ENCODE measurements at regions of chr20 and their contacts with region 1.

Region 1: GRCh38 chr20:64119681-64120341 is 12.4 kb upstream of the NPBWR2 start:
- DNase-seq: peak in 1 of 2 experiments; percentile 49
- H3K4me3 ChIP-seq: no peak overlapping the region
- H3K27ac ChIP-seq: no peak overlapping the region
- H3K4me1 ChIP-seq: no peaks in the 10 kb centered on the region; a peak in 2 of 7 replicates
- H3K27me3 ChIP-seq: no peaks in the 10 kb centered on the region; a peak in 2 of 7 replicates
- CTCF ChIP-seq: no peak
- EP300 ChIP-seq: no peak
- POLR2A ChIP-seq: no peak
- RAD21 ChIP-seq: no peak

Region 2: DNA sequence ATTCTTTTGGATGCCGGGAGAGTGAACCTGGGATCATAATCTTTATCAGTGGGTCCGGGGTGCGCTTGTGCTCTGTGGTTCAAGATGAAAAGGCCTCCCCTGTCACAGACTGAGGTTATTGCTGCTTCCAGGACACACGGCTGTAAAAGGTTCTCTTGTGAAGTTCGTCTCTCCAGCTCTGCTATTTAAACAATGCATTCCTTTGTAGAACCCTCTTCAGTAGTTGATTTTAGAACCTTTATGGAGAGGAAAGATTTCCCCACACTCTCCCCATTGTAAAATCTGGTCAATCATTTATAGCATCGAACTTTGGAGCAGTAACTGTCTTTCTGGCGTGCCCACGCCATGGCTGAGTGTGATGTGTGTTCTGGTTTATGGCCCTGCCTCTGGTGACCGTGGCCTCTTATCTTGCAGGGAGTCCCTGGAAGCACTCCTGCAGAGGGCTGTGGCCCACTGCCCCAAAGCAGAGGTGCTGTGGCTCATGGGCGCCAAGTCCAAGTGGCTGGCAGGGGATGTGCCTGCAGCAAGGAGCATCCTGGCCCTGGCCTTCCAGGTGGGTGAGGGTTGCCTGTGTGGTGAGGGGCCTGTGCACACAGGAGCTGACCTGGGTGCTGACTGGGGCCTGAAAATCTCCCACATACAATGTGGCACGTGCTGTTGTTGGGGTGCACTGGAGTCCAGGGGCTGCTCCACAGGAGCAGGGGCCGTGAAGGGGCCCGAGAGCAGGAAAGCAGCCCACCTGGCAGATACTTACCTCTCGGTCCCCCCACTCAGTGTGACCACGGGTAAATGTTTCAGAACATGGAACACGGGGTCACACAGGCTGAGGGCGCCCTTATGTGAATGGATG is 95.4 kb before region 1 on chr20:
- CTCF ChIA-PET with region 1: interaction called, 17 read pairs
- POLR2A ChIA-PET with region 1: no interaction called
- DNase-seq: no peak
- H3K4me3 ChIP-seq: no peak overlapping the region
- H3K27ac ChIP-seq: no peak overlapping the region
- H3K4me1 ChIP-seq: no peaks in the 10 kb centered on the region
- H3K27me3 ChIP-seq: no peaks in the 10 kb centered on the region
- CTCF ChIP-seq: no peak
- EP300 ChIP-seq: no peak
- POLR2A ChIP-seq: no peak
- RAD21 ChIP-seq: no peak

Region 3: DNA sequence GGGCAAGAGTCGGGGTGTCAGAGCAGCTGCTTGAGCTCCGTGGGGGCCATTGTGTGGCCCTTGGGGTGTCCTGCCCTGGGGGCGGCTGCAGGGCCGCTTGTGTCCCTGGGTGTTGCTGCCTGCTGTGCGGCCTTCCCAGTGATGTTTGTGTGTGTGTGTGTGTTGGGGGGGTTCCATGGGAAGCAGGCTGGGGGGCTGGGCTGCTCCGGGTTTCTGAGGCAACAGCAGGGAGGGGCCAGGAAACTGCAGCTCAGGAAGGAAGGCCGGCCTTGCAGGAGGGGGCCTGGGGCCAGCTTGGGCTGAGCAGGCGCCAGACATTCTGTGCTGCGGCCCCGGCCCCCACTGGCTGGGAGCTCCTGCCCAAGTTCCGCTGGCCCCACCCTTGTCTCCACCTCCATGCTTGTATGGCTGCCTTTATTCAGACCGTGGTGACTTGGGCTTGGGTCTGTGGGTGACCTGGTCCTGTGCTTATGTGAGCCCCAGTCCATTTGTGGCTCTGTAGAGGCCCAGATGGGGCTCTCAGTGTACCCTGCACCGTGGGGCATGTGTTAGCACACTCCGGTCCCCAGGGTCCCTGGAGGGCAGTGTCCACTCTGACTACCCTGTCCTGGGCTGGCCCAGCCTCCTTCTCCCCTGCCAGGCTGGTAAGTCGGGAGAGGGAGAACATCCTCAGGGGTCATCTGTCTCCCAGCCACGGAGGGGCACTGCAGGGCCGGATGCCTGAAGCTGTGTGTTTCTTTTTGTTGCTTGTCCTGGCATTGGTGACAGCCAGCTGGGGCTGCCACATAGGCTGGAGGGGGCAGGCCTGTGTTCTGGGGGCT is 65.8 kb before region 1 on chr20:
- CTCF ChIA-PET with region 1: interaction called, 35 read pairs
- POLR2A ChIA-PET with region 1: no interaction called
- DNase-seq: no peak
- H3K4me3 ChIP-seq: no peak overlapping the region
- H3K27ac ChIP-seq: no peak overlapping the region
- H3K4me1 ChIP-seq: peaks cover 0 to 28% (median 15%) of the 10 kb centered on the region in 4 experiments; a peak in 6 of 7 replicates
- H3K27me3 ChIP-seq: peaks cover 15 to 30% (median 22%) of the 10 kb centered on the region in 4 experiments
- CTCF ChIP-seq: peak; percentile 53 to 67 (median 64)
- EP300 ChIP-seq: no peak
- POLR2A ChIP-seq: no peak
- RAD21 ChIP-seq: peak; percentile 47 to 59; a peak in 3 of 4 replicates

Region 4: DNA sequence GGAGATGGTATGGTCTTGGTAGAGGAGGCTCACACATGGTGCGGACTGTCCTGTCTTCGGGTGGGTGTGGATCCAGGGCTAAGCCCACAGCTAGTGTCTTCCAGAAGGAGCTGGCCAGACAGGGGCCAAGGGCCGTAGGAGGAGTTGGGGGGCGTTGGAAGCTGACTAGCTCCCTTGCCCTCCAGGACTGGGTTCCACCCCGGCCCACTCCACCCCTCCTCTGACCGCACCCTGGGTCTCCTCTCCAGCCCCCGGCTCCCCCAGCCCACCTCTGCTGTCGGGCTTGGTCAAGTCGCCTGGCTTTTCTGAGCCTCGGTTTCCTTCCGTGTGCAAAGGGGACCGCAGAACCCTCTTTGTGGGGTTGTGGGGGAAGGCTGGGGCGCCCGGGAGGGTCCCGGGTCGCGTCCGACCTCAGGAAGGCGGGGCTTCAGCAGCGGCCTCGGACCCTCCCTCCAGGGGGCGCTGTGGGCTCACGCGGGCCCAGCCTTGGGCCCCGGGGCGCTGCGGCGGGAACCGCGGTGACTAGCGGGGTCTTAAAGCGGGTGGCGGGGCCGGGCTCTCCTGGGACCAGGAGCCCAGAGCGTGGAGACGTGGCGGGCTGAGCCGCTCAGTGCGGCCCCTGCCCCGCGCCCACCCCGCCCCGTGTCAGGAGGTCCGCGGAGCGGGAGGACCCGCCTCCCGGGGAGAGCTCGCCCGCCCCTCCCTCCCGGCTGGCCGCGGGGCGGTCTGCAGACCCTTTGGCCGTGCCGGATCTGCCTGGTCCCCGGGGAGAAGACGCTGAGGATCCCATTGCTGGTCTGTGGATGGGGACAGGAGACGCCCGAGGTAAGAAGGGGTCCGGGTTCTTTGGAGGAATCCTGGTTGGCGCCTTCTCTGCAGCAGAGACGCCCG is 17.8 kb before region 1 on chr20:
- CTCF ChIA-PET with region 1: interaction called, 59 read pairs
- POLR2A ChIA-PET with region 1: no interaction called
- DNase-seq: peak in 1 of 2 experiments; percentile 94
- H3K4me3 ChIP-seq: peak overlapping the region; percentile 37 to 71 (median 52)
- H3K27ac ChIP-seq: no peak overlapping the region
- H3K4me1 ChIP-seq: peaks cover 0 to 8% (median 3%) of the 10 kb centered on the region in 4 experiments; a peak in 3 of 7 replicates
- H3K27me3 ChIP-seq: peaks cover 2 to 26% (median 21%) of the 10 kb centered on the region in 4 experiments
- CTCF ChIP-seq: peak; percentile 71 to 87 (median 78)
- EP300 ChIP-seq: no peak
- POLR2A ChIP-seq: no peak
- RAD21 ChIP-seq: peak; percentile 60 to 76

Region 5: GRCh38 chr20:64145458-64145857 is 25.6 kb after region 1 on chr20:
- CTCF ChIA-PET with region 1: interaction called, 14 read pairs
- POLR2A ChIA-PET with region 1: no interaction called
- DNase-seq: peak in 1 of 2 experiments; percentile 78
- H3K4me3 ChIP-seq: no peak overlapping the region
- H3K27ac ChIP-seq: no peak overlapping the region
- H3K4me1 ChIP-seq: peaks cover 0 to 8% (median 0%) of the 10 kb centered on the region in 4 experiments; a peak in 1 of 7 replicates
- H3K27me3 ChIP-seq: no peaks in the 10 kb centered on the region
- CTCF ChIP-seq: peak; percentile 65 to 89 (median 85)
- EP300 ChIP-seq: no peak
- POLR2A ChIP-seq: no peak
- RAD21 ChIP-seq: peak; percentile 35 to 49